H1 (cell line): ENCODE measurements at regions of chr5 and their contacts with region 1.

Region 1: DNA sequence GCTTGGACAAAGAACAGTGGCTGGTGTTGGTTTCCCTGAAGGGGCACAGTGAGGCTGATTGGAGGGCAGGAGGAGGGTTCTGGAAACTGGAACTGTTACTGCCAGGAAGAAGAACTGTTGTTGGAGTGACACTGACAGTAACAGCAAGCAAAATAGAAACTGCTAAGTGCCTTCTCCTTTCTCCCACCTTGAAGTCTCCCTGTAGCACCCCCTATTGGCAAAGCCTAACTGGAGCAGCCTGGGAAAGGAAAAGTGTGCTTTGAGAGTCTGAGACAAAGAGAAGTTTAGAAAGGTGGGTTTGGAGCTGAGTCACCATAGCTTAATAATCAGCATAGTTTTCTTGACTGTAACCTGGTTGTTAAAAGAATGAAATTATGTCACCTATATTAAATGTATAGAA is 2.5 kb upstream of the TMEM174 start:
- DNase-seq: peak; percentile 50 to 72
- H3K4me3 ChIP-seq: no peak overlapping the region
- H3K27ac ChIP-seq: no peak overlapping the region
- H3K4me1 ChIP-seq: no peaks in the 10 kb centered on the region
- H3K27me3 ChIP-seq: no peaks in the 10 kb centered on the region
- CTCF ChIP-seq: peak; percentile 34 to 89 (median 79)
- EP300 ChIP-seq: no peak
- POLR2A ChIP-seq: no peak
- RAD21 ChIP-seq: peak; percentile 64 to 79

Region 2: DNA sequence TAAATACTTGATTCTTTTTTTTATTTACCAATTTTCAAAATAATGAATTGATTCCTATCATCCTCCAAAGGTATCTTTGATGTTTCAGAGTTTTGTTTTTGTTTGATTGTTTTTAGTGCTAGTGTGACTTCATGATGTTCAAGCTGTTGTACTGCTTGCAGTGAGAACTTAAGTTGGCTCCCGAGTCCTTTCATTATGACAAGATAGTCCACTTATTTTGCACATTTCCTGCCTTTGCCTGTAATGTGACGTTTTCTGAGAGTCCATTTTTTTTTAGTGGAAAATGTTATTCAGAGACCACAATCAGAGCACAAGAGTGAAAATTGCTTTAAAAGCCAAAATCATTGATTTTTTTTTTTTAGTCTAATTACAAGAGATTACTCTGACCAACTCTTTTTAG is 274.8 kb before region 1 on chr5:
- CTCF ChIA-PET with region 1: no interaction called
- POLR2A ChIA-PET with region 1: no interaction called
- DNase-seq: no peak
- H3K4me3 ChIP-seq: no peak overlapping the region
- H3K27ac ChIP-seq: no peak overlapping the region
- H3K4me1 ChIP-seq: no peaks in the 10 kb centered on the region
- H3K27me3 ChIP-seq: no peaks in the 10 kb centered on the region
- CTCF ChIP-seq: no peak
- EP300 ChIP-seq: no peak
- POLR2A ChIP-seq: no peak
- RAD21 ChIP-seq: no peak

Region 3: GRCh38 chr5:72988769-72989168 is 181.8 kb before region 1 on chr5:
- CTCF ChIA-PET with region 1: no interaction called
- POLR2A ChIA-PET with region 1: no interaction called
- DNase-seq: no peak
- H3K4me3 ChIP-seq: no peak overlapping the region
- H3K27ac ChIP-seq: no peak overlapping the region
- H3K4me1 ChIP-seq: no peaks in the 10 kb centered on the region
- H3K27me3 ChIP-seq: no peaks in the 10 kb centered on the region
- CTCF ChIP-seq: no peak
- EP300 ChIP-seq: no peak
- POLR2A ChIP-seq: no peak
- RAD21 ChIP-seq: no peak

Region 4: GRCh38 chr5:73088026-73088425 is 82.5 kb before region 1 on chr5:
- CTCF ChIA-PET with region 1: interaction called, 16 read pairs
- POLR2A ChIA-PET with region 1: no interaction called
- DNase-seq: no peak
- H3K4me3 ChIP-seq: no peak overlapping the region
- H3K27ac ChIP-seq: no peak overlapping the region
- H3K4me1 ChIP-seq: no peaks in the 10 kb centered on the region
- H3K27me3 ChIP-seq: no peaks in the 10 kb centered on the region
- CTCF ChIP-seq: no peak
- EP300 ChIP-seq: no peak
- POLR2A ChIP-seq: no peak
- RAD21 ChIP-seq: no peak

Region 5: DNA sequence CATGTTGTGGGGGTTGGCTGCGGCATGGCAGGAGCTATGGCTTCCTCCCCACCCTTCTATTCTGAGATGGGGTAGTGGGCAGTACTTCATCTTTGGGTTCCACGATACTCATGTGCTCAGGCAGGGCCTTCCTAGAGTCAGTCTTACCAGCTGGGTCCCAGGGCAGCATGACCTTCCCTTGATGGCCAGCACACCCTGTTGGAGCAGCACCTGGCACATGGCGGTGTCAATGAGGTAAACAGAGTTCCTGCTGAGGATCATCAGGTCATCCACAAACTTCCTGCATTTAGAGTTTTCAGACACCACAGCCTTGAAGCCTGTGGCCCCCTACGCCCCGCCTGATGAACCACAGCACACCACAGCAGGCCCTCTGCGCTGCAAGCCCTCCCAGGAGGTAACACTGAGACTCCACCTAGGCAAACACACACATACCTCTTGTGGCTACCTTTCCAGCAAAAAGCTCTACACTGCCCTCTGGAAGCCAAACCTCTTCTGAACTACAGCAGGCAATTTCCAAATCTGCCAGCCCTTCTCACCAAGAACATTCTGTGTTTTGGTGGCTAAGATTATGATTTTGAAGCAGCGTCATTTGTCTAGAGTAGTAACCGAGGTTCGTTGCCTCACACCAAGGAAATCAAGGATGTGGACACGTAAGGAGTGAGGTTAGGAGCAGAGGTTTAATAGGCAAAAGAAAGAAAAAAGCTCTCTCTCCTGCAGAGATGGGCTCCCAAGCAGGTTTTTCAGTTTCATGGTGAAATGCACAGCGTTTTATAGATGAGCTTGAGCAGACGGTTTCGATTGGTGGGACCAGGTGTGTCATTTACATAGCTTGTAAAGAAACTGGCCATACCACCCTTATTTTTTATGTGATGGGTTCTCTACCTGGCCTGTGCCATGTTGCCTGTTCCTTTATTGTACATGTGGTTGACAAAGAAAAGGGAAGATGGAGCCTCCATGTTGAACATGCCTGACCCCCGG is 17.8 kb before region 1 on chr5:
- CTCF ChIA-PET with region 1: interaction called, 39 read pairs
- POLR2A ChIA-PET with region 1: no interaction called
- DNase-seq: no peak
- H3K4me3 ChIP-seq: no peak overlapping the region
- H3K27ac ChIP-seq: no peak overlapping the region
- H3K4me1 ChIP-seq: peaks cover 0 to 2% (median under 1%) of the 10 kb centered on the region in 4 experiments; a peak in 1 of 7 replicates
- H3K27me3 ChIP-seq: no peaks in the 10 kb centered on the region
- CTCF ChIP-seq: peak in 2 of 3 experiments; percentile 42; a peak in 3 of 4 replicates
- EP300 ChIP-seq: no peak
- POLR2A ChIP-seq: no peak
- RAD21 ChIP-seq: peak; percentile 44 to 56

Region 6: GRCh38 chr5:73180566-73180965 is 10.0 kb after region 1 on chr5:
- CTCF ChIA-PET with region 1: interaction called, 14 read pairs
- POLR2A ChIA-PET with region 1: no interaction called
- DNase-seq: no peak
- H3K4me3 ChIP-seq: no peak overlapping the region
- H3K27ac ChIP-seq: no peak overlapping the region
- H3K4me1 ChIP-seq: peaks cover 0 to 3% (median 0%) of the 10 kb centered on the region in 4 experiments; a peak in 1 of 7 replicates
- H3K27me3 ChIP-seq: no peaks in the 10 kb centered on the region
- CTCF ChIP-seq: no peak
- EP300 ChIP-seq: no peak
- POLR2A ChIP-seq: no peak
- RAD21 ChIP-seq: no peak

Region 7: DNA sequence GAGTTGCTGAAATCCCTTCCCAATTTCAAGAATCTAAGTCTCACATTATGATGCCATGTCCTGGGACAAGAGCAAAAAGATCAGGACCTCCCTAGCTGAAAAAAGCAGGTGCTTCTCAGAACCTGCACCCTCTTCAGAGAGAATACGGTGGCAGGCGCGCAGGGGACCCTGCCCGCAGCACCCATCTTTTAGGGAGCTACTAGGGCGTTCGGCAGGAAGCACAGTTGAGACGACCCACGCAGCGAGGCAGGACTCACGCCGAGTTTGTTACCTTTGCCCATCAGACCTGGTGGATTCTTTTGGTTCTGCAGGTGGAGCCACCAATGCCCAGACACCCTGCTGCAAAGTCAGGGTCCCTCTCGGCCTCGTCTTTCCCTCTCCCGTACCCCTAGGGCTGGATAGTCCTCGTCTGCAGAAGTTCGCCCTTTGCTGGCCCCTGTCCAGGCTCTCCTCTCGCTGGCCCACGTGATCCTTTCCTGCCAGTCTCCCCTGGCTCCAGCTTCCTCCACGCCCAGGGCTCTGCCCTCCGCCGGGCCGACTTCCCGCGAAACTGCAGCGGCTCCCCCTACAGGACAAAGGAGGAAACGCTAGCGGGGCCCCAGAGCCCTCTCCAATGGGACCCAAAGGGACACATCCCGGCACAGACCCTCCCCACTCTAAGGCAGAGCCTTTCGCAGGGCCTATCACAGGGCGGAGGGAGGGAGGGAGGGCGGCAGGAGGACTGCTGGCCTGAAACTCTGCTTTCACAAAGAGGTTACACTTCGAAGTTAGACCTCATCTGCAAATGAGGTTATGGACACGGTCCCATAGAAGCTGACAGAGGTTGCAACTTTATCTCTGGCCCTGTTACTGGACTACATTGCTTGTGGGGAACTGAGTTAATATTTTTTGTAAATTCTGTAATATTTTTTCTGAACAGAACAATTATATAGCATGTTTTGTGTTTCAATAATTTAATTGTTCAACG is 31.3 kb after region 1 on chr5:
- CTCF ChIA-PET with region 1: interaction called, 16 read pairs
- POLR2A ChIA-PET with region 1: no interaction called
- DNase-seq: peak; percentile 91 to 99
- H3K4me3 ChIP-seq: no peak overlapping the region
- H3K27ac ChIP-seq: no peak overlapping the region
- H3K4me1 ChIP-seq: peaks cover 0 to 4% (median 2%) of the 10 kb centered on the region in 4 experiments; a peak in 3 of 7 replicates
- H3K27me3 ChIP-seq: peaks cover 0 to 8% (median 5%) of the 10 kb centered on the region in 4 experiments; a peak in 3 of 7 replicates
- CTCF ChIP-seq: peak; percentile 80 to 91 (median 84)
- EP300 ChIP-seq: 0 out of 3 replicates have a peak, but pooled peaks of 1 of the 2 experiments have one; percentile 40
- POLR2A ChIP-seq: no peak
- RAD21 ChIP-seq: peak; percentile 78 to 87